ENCODE measurements at regions of chr19 and their contacts with region 1.

Region 1: GRCh38 chr19:53867225-53868090 is at the start of gene MYADM:
- DNase-seq: peak; percentile 100
- ATAC-seq: peak; percentile 77
- H3K4me3 ChIP-seq: peak within 1 kb of the TSS; percentile 82 to 100 (median 90)
- H3K4me3 Mint-ChIP-seq: peak within 1 kb of the TSS; percentile 92
- H3K27ac ChIP-seq: peak within 1 kb of the TSS; percentile 98 to 99
- H3K27ac Mint-ChIP-seq: peak within 1 kb of the TSS; percentile 99
- H3K4me1 ChIP-seq: peaks cover 33 to 59% of the 10 kb centered on the region in 2 donors
- H3K4me1 Mint-ChIP-seq: peaks cover 38% of the 10 kb centered on the region
- H3K27me3 ChIP-seq: no peaks in the 10 kb centered on the region
- H3K27me3 Mint-ChIP-seq: no peaks in the 10 kb centered on the region
- CTCF ChIP-seq: no peak
- total RNA-seq, gene MYADM: 18.5 and 18.9 TPM in 2 replicates

Region 2: GRCh38 chr19:52171321-52172169 is 1695.9 kb before region 1 on chr19 and contains the start of gene ZNF836:
- CTCF ChIA-PET with region 1: no interaction called
- POLR2A ChIA-PET with region 1: no interaction called
- intact Hi-C with region 1: loop called (anchors 5 kb)
- DNase-seq: peak; percentile 92
- ATAC-seq: peak; percentile 98
- H3K4me3 ChIP-seq: peak within 1 kb of the TSS; percentile 71 to 100 (median 82)
- H3K4me3 Mint-ChIP-seq: peak within 1 kb of the TSS; percentile 98
- H3K27ac ChIP-seq: peak within 1 kb of the TSS; percentile 66 to 90
- H3K27ac Mint-ChIP-seq: peak within 1 kb of the TSS; percentile 97
- H3K4me1 ChIP-seq: peaks cover 17 to 20% of the 10 kb centered on the region in 2 donors
- H3K4me1 Mint-ChIP-seq: peaks cover 35% of the 10 kb centered on the region
- H3K27me3 ChIP-seq: no peaks in the 10 kb centered on the region
- H3K27me3 Mint-ChIP-seq: no peaks in the 10 kb centered on the region
- CTCF ChIP-seq: no peak
- total RNA-seq, gene ZNF836: 42.0 and 46.4 TPM in 2 replicates

Region 3: GRCh38 chr19:53879140-53880081 is 12.0 kb after region 1 on chr19:
- CTCF ChIA-PET with region 1: interaction called, 10 read pairs
- POLR2A ChIA-PET with region 1: no interaction called
- intact Hi-C with region 1: loop called (anchors 1 kb)
- DNase-seq: peak; percentile 84
- ATAC-seq: peak; percentile 86
- H3K4me3 ChIP-seq: peak overlapping the region; percentile 34 to 65 (median 49)
- H3K4me3 Mint-ChIP-seq: no peak overlapping the region
- H3K27ac ChIP-seq: no peak overlapping the region
- H3K27ac Mint-ChIP-seq: peak overlapping the region; percentile 37
- H3K4me1 ChIP-seq: peaks cover 63 to 74% of the 10 kb centered on the region in 2 donors
- H3K4me1 Mint-ChIP-seq: peaks cover 40% of the 10 kb centered on the region
- H3K27me3 ChIP-seq: peaks cover 0 to 54% (median 43%) of the 10 kb centered on the region in 4 experiments
- H3K27me3 Mint-ChIP-seq: peaks cover 16% of the 10 kb centered on the region
- CTCF ChIP-seq: no peak

Region 4: GRCh38 chr19:54102421-54103169 is 235.1 kb after region 1 on chr19 and contains the start of gene NDUFA3:
- CTCF ChIA-PET with region 1: interaction called, 3 read pairs
- POLR2A ChIA-PET with region 1: no interaction called
- intact Hi-C with region 1: loop called (anchors 1 kb)
- DNase-seq: peak; percentile 99
- ATAC-seq: peak; percentile 99
- H3K4me3 ChIP-seq: peak within 1 kb of the TSS; percentile 59 to 90 (median 76)
- H3K4me3 Mint-ChIP-seq: peak within 1 kb of the TSS; percentile 100
- H3K27ac ChIP-seq: peak within 1 kb of the TSS; percentile 59 to 74
- H3K27ac Mint-ChIP-seq: peak within 1 kb of the TSS; percentile 89
- H3K4me1 ChIP-seq: peaks cover 6 to 13% of the 10 kb centered on the region in 2 donors
- H3K4me1 Mint-ChIP-seq: peaks cover 20% of the 10 kb centered on the region
- H3K27me3 ChIP-seq: no peaks in the 10 kb centered on the region
- H3K27me3 Mint-ChIP-seq: no peaks in the 10 kb centered on the region
- CTCF ChIP-seq: no peak
- total RNA-seq, gene NDUFA3: 91.8 and 94.4 TPM in 2 replicates

Region 5: GRCh38 chr19:54463531-54464043 is 596.1 kb after region 1 on chr19 and contains the start of gene LENG9:
- CTCF ChIA-PET with region 1: no interaction called
- POLR2A ChIA-PET with region 1: no interaction called
- intact Hi-C with region 1: loop called (anchors 5 kb)
- DNase-seq: no peak
- ATAC-seq: peak; percentile 62
- H3K4me3 ChIP-seq: peak within 1 kb of the TSS; percentile 65 to 88 (median 74)
- H3K4me3 Mint-ChIP-seq: peak within 1 kb of the TSS; percentile 91
- H3K27ac ChIP-seq: peak within 1 kb of the TSS; percentile 84 to 85
- H3K27ac Mint-ChIP-seq: peak within 1 kb of the TSS; percentile 93
- H3K4me1 ChIP-seq: peaks cover 16 to 29% of the 10 kb centered on the region in 2 donors
- H3K4me1 Mint-ChIP-seq: peaks cover 23% of the 10 kb centered on the region
- H3K27me3 ChIP-seq: peaks cover 0 to 3% (median 0%) of the 10 kb centered on the region in 4 experiments
- H3K27me3 Mint-ChIP-seq: peaks cover 6% of the 10 kb centered on the region
- CTCF ChIP-seq: no peak
- total RNA-seq, gene LENG9: 6.6 and 6.9 TPM in 2 replicates

Measured in B cell (primary cell).